ENCODE measurements at regions of chr1 and their contacts with region 1.

Region 1: DNA sequence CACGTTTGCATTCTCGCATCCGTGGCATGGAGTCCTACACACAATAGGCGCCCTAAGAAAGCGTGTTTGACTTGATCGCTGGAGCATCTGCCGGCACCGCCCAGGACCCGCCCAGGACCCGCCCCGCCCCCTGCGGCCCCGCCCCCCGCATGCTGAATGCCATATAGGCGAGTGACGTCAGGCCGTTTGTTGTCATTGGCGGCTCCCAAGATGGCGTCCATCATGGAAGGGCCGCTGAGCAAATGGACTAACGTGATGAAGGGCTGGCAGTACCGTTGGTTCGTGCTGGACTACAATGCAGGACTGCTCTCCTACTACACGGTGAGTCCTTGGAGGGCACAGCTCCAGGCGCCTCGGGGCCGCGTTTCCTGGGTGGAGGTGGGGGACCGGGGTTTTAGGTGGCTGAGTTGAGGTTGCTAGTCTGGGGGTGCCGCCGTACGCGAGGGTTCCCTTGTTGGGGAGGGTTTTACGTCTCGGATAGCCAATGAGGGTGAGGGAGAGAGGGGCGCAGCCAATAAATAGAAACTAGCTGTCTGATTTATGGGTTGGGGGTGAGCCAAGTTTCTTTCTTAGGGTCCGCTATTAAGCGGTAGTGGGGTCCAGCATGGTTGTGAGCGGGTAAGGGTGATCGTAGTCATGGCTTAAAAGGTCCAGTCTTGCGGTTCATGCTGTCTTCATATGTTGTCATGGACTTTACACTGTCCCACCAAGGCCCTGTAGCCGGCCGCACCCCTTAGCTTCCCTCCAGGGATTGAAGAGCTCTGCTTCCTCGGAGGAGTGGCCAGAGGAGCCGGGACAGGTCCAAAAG is at the start of gene OSBPL9:
- DNase-seq: peak; percentile 69 to 94
- H3K4me3 ChIP-seq: peak within 1 kb of the TSS; percentile 81 to 86
- H3K27ac ChIP-seq: peak within 1 kb of the TSS; percentile 91 to 92
- H3K4me1 ChIP-seq: peaks cover 0 to 16% of the 10 kb centered on the region in 2 donors
- H3K27me3 ChIP-seq: no peaks in the 10 kb centered on the region
- CTCF ChIP-seq: no peak
- total RNA-seq, gene OSBPL9: 101 TPM

Region 2: DNA sequence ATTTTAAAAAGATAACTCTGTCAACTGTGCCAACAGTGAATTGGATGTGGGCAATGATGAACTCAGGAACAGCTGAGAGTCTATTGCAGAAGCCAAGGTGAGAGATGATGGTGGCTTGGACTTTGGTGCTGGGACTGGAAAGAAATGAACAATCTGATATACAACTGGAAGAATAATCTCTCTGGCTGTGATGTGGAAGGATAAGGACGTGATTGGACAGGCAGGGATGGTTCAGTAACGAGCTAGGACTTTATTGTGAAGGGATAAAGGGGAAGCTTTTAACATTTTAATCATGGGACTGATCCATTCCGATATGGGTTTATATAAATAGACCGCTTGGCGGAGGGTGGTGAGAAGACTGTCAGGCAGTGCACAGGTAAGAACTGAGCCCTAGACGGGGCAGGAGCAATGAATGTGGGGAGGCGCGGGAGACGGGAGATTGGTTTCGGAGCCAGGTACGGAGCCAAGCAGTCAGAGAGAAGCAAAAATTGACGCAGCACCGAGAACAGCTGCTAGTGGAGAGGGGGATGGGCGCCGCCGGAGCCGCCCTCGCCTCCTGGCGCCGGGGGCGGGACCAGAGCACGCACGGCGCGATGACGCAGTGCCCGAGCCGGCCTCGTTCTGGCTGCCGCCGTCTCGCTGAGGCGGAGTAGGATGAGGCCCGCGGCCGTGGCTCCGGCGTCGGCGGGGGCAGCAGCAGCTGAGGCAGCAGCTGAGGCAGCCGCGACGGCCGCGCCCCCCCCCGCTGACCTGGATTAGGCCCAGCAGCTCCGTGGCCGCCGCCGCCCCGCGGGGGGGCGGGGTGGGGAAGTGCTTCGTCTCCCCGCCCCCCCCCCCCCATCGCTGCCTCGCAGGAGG is 381.2 kb before region 1 on chr1 and contains the start of gene RNF11:
- intact Hi-C with region 1: loop called (anchors 10 kb)
- DNase-seq: peak; percentile 74 to 96
- H3K4me3 ChIP-seq: peak within 1 kb of the TSS; percentile 86 to 93
- H3K27ac ChIP-seq: peak within 1 kb of the TSS; percentile 96 to 97
- H3K4me1 ChIP-seq: peaks cover 0 to 19% of the 10 kb centered on the region in 2 donors
- H3K27me3 ChIP-seq: no peaks in the 10 kb centered on the region
- CTCF ChIP-seq: no peak
- total RNA-seq, gene RNF11: 56.9 TPM

Region 3: DNA sequence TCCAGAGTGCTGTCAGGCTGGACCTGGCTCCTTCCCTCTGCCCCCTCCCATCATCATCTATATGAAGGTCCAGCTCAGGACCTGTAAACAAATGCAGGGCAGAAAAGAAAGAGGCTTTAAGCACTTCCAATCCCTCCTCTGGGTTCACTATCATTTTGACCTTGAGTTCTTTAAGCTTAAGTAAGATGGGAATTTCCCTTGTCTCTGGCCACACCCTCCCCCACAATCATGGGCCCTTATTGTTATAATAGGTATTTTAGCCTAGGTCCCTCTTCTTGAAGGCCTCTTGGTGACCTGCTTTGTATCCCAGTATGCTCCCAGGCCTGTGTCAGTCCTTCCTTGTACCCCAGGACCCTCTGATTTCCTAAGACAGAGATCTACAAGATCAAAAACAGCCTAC is 53.0 kb before region 1 on chr1:
- intact Hi-C with region 1: loop called (anchors 5 kb)
- DNase-seq: no peak
- H3K4me3 ChIP-seq: no peak overlapping the region
- H3K27ac ChIP-seq: peak overlapping the region; percentile 68
- H3K4me1 ChIP-seq: peaks cover 0 to 37% of the 10 kb centered on the region in 2 donors
- H3K27me3 ChIP-seq: no peaks in the 10 kb centered on the region
- CTCF ChIP-seq: no peak

Region 4: DNA sequence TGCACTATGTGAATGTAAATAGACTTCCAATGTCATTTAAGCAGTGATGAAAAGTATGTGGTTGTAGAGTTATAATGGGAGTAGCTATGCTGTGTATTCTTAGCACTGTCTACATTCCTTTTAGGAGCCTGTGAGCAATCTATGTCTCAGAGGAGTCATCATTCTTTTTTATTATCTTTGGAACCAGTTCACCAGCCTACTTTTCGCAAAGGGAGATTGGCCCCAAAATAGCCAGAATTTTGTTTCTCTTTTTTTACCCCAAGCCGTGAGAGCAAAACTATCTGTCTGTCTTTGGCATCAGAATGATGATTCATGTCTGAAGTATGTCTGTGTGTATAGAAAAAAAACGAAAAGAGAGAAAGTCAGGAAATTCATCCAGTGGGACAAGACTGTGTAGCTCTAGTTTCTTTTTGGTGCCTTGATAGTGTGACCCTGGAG is 44.0 kb after region 1 on chr1:
- intact Hi-C with region 1: loop called (anchors 1 kb)
- DNase-seq: no peak
- H3K4me3 ChIP-seq: peak overlapping the region in 1 of 2 donors; percentile 19
- H3K27ac ChIP-seq: peak overlapping the region; percentile 80 to 83
- H3K4me1 ChIP-seq: peaks cover 4 to 63% of the 10 kb centered on the region in 2 donors
- H3K27me3 ChIP-seq: no peaks in the 10 kb centered on the region
- CTCF ChIP-seq: no peak

Region 5: DNA sequence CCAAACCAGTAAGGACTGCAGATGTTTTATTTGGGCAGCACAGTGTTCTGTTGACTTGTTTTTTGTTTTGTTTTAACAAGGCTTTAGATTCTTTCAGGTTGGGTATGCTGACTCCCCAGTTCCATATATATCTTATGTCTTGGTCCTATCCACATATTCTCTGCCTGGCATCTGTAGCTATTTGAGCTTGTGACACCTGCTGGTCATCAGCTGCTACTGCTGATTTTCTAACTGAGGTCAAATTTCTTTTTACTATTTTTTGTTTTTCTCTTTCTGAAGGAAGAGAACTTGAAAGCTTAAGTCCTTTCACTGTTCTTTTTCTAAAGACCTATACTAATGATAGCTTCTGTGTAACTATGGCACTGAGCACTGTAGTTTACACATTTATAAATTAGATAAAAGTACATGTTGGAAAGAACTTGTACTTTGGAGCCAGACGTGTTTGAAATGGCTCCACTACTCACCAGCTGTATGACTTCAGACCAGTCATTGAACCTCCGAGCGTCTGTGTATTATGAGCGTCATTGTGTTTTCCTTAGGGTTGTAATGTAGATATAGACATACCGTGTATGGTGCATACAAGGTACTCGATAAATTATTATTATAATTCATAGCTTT is 152.0 kb after region 1 on chr1:
- intact Hi-C with region 1: loop called (anchors 5 kb)
- DNase-seq: no peak
- H3K4me3 ChIP-seq: no peak overlapping the region
- H3K27ac ChIP-seq: peak overlapping the region; percentile 29 to 43
- H3K4me1 ChIP-seq: peaks cover 0 to 2% of the 10 kb centered on the region in 2 donors
- H3K27me3 ChIP-seq: no peaks in the 10 kb centered on the region
- CTCF ChIP-seq: peak; percentile 74 to 88 (median 80)

Region 6: GRCh38 chr1:51863384-51863783 is 246.3 kb after region 1 on chr1:
- intact Hi-C with region 1: no loop called
- DNase-seq: no peak
- H3K4me3 ChIP-seq: no peak overlapping the region
- H3K27ac ChIP-seq: no peak overlapping the region
- H3K4me1 ChIP-seq: no peaks in the 10 kb centered on the region
- H3K27me3 ChIP-seq: no peaks in the 10 kb centered on the region
- CTCF ChIP-seq: no peak

Measured in ascending aorta (tissue), 2 donors.